Activated T-helper 2 cell treated with anti-CD3 and anti-CD28 coated beads, Interferon-gamma antibody, Interleukin-2, Interleukin-4, amounts not matched to agents 10 μg/mL and 5 μg/mL and 100 μg/mL, durations not matched to agents 14 hours and 24 hours and 36 hours (primary cell): ENCODE measurements at regions of chr13 and their contacts with region 1.

Region 1: GRCh38 chr13:28819735-28820098 is 422 bp upstream of the MTUS2 start:
- DNase-seq: peak; percentile 34
- H3K4me3 Mint-ChIP-seq: no peak overlapping the region
- H3K27ac Mint-ChIP-seq: no peak overlapping the region
- H3K4me1 Mint-ChIP-seq: no peaks in the 10 kb centered on the region
- H3K27me3 Mint-ChIP-seq: peaks cover 51% of the 10 kb centered on the region

Region 2: GRCh38 chr13:29362849-29363604 is 543.3 kb after region 1 on chr13:
- intact Hi-C with region 1: loop called (anchors 10 kb)
- DNase-seq: peak; percentile 10
- H3K4me3 Mint-ChIP-seq: no peak overlapping the region
- H3K27ac Mint-ChIP-seq: no peak overlapping the region
- H3K4me1 Mint-ChIP-seq: no peaks in the 10 kb centered on the region
- H3K27me3 Mint-ChIP-seq: peaks cover 5% of the 10 kb centered on the region